AG04449 (cell line): ENCODE measurements at regions of chr21 and their contacts with region 1.

Region 1: GRCh38 chr21:34141373-34141772 is 68.0 kb downstream of the MRPS6 start:
- DNase-seq: no peak
- H3K4me3 ChIP-seq: no peak overlapping the region
- CTCF ChIP-seq: no peak

Region 2: DNA sequence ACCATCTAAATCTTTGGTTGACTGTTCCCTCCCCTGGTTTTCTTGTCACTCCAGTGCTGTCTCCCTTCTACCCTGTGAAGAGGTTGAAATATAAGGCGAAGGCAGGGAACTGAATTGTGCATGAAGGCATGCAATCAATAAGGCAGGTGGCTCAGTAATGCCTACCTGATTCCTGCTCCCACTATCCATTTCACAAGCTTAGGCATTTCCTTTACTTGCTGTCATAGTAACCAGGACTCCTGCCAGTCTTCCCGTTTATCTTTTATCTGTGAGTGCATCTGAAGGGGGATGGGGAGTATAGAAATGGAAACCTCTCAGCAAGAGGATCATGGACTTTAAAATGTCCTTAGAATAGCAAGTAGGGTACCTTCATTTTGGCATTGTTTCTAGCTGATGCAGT is 27.5 kb before region 1 on chr21:
- CTCF ChIA-PET with region 1: no interaction called
- POLR2A ChIA-PET with region 1: no interaction called
- DNase-seq: no peak
- H3K4me3 ChIP-seq: no peak overlapping the region
- CTCF ChIP-seq: no peak

Region 3: DNA sequence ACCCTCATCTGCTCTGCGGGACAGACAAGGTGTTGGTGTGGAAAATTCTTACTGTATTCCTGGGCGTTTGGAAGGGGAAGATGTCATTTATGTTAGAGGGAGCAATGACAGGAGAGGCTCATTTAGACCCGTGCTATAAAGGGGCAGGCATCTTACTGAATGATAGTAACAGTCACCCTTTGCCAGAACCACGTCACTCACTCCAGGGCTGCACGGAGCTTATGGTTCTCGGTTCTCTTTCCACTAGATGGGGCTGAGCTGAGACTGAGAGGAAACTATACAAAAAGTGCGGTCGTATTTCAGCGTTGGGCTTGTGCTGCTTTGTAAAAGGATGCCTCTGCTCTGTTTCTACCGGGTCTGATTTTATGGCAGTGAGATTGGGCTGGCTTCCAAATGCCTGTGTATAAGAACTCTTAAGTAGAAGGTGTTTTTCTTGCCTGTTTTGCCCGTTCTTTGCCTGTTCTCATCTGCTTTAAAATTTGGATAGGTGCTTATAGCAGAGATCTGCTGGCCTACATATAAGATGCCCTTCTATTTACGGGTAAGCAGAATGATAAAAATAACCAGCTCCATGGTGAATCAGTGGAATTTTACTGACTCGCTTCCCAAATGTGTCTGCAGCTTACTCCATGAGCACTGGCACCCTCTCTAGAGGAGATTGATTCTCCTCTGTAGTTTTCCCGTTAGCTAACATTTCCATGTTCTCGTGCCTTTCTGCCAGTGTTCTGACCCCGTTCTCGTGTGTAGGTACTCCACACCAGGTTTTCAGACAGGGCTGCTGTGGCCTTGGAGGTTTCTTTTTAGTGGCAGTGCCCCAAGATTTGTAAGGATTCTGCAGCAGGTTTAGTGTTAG is 12.1 kb before region 1 on chr21:
- CTCF ChIA-PET with region 1: interaction called, 13 read pairs
- POLR2A ChIA-PET with region 1: no interaction called
- DNase-seq: peak; percentile 58
- H3K4me3 ChIP-seq: peak overlapping the region; percentile 29
- CTCF ChIP-seq: peak; percentile 62

Region 4: GRCh38 chr21:34592120-34592955 is 451.0 kb after region 1 on chr21:
- CTCF ChIA-PET with region 1: no interaction called
- POLR2A ChIA-PET with region 1: no interaction called
- DNase-seq: no peak
- H3K4me3 ChIP-seq: no peak overlapping the region
- CTCF ChIP-seq: no peak